GM12878 (cell line): ENCODE measurements at regions of chr1 and their contacts with region 1.

Region 1: GRCh38 chr1:16217061-16217785 is 4.8 kb upstream of the ARHGEF19 start:
- DNase-seq: peak; percentile 78
- ATAC-seq: peak; percentile 99
- H3K4me3 ChIP-seq: peak overlapping the region; percentile 61; the same call in 1 of the 2 replicates
- H3K27ac ChIP-seq: no peak overlapping the region
- H3K4me1 ChIP-seq: peaks cover 5% of the 10 kb centered on the region; the same call in 1 of the 2 replicates
- H3K27me3 ChIP-seq: no peaks in the 10 kb centered on the region; a peak in 1 of 4 replicates
- CTCF ChIP-seq: no peak
- EP300 ChIP-seq: no peak
- POLR2A ChIP-seq: peak; percentile 27; the same call in 1 of the 2 replicates
- RAD21 ChIP-seq: no peak

Region 2: GRCh38 chr1:16206547-16207317 is 10.5 kb before region 1 on chr1:
- CTCF ChIA-PET with region 1: interaction called, 4 read pairs
- POLR2A ChIA-PET with region 1: interaction called, 15 read pairs
- RAD21 ChIA-PET with region 1: interaction called, 5 read pairs
- SMC1A ChIA-PET with region 1: no interaction called
- in situ Hi-C with region 1: no loop called
- intact Hi-C with region 1: loop called (anchors 1 kb)
- DNase-seq: peak; percentile 71
- ATAC-seq: peak; percentile 93
- H3K4me3 ChIP-seq: peak overlapping the region; percentile 68
- H3K27ac ChIP-seq: peak overlapping the region; percentile 28; the same call in 1 of the 2 replicates
- H3K4me1 ChIP-seq: peaks cover 4% of the 10 kb centered on the region; the same call in 1 of the 2 replicates
- H3K27me3 ChIP-seq: no peaks in the 10 kb centered on the region
- CTCF ChIP-seq: no peak
- EP300 ChIP-seq: no peak
- POLR2A ChIP-seq: peak; percentile 87
- RAD21 ChIP-seq: no peak

Region 3: DNA sequence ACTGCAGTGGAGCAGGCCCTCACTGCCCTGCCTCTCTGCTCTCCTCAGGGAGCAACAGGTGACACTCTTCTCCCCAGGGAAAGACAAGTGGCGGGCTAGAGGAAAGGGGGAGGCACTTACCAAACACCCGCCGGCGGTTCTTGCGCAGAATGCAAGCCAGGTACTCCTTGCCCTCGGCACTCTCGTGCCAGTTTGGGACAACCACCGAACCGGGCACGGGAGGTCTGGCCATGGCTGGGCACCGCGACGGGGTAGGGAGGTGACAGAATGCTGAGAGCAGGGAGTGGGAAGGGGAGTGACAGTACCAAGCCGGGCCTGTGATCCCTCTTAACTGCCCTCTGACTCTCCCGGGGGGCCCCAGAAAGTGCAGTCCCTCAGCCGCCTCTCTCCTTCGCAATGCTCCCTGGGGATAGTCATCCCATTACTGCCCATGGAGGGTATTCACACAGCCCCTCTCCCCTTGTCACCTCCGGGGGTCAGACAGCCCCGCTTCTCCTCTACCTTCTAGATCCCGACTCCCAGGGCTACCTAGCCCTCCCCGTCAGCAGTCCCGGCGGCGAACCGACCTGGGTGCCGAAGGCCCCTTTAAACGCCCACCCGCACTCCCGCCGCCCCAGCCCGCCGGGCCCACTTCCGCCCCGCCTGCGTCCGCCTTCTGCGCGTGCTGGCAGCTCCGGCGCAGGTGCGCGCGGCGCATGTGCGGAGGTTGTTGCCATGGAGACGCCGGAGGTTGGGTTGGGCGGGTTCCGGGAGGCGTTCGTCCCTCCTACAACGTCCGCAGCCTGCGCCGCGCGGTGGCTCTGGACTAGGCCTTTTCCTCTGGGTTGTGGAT is 19.5 kb after region 1 on chr1 and contains the start of gene CPLANE2:
- CTCF ChIA-PET with region 1: interaction called, 3 read pairs
- POLR2A ChIA-PET with region 1: interaction called, 14 read pairs
- RAD21 ChIA-PET with region 1: interaction called, 9 read pairs
- SMC1A ChIA-PET with region 1: interaction called, 3 read pairs
- in situ Hi-C with region 1: no loop called
- intact Hi-C with region 1: no loop called
- DNase-seq: peak; percentile 76
- ATAC-seq: peak; percentile 93
- H3K4me3 ChIP-seq: peak within 1 kb of the TSS; percentile 68
- H3K27ac ChIP-seq: peak within 1 kb of the TSS; percentile 84
- H3K4me1 ChIP-seq: peaks cover 17% of the 10 kb centered on the region
- H3K27me3 ChIP-seq: no peaks in the 10 kb centered on the region
- CTCF ChIP-seq: peak in 1 of 3 experiments; percentile 1; a peak in 1 of 6 replicates
- EP300 ChIP-seq: no peak
- POLR2A ChIP-seq: peak; percentile 67; the same call in 1 of the 2 replicates
- RAD21 ChIP-seq: no peak
- polyA plus RNA-seq, gene CPLANE2: 0.09 TPM in 1 of 2 experiments, not detected in the other